MCF 10A (cell line): ENCODE measurements at regions of chr9 and their contacts with region 1.

Region 1: GRCh38 chr9:105064315-105065097 is 136.6 kb upstream of the ABCA1 start:
- DNase-seq: peak; percentile 97
- H3K4me3 Mint-ChIP-seq: peak overlapping the region; percentile 47
- H3K27ac Mint-ChIP-seq: peak overlapping the region; percentile 92
- H3K4me1 Mint-ChIP-seq: peaks cover 16% of the 10 kb centered on the region
- H3K27me3 Mint-ChIP-seq: no peaks in the 10 kb centered on the region
- CTCF ChIP-seq: no peak

Region 2: DNA sequence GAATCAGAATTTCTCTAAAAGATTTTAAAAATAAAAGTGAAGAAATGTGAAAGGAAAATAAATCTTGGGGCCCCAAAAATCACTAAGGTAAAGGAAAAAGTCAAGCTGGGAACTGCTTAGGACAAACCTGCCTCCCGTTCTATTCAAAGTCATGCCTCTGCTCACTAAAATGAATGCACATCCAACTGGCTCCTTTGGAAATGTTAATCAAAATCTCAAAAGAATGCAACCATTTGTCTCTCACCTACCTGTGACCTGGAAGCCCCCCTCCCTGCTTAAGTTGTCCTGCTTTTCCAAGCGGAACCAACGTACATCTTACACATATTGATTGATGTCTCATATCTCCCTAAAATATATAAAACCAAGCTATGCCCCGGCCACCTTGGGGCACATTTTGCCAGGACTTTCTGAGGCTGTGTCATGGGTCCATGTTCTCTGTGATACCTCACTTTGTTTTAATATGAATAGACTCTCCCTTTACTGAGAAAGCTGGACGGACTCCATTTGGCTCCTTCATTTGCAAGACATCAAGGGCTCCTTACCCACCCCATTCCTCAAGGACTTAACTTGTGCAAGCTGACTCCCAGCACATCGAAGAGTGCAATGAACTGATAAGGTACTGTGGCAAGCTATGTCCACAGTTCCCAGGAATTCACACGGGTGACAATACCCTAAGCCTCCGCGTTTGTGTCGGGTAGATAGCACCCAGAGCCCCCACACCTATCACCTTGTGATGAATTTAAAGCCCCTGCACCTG is 806.0 kb before region 1 on chr9:
- CTCF ChIA-PET with region 1: no interaction called
- POLR2A ChIA-PET with region 1: no interaction called
- intact Hi-C with region 1: no loop called
- DNase-seq: no peak
- H3K4me3 Mint-ChIP-seq: no peak overlapping the region
- H3K27ac Mint-ChIP-seq: no peak overlapping the region
- H3K4me1 Mint-ChIP-seq: peaks cover 10% of the 10 kb centered on the region
- H3K27me3 Mint-ChIP-seq: no peaks in the 10 kb centered on the region
- CTCF ChIP-seq: no peak

Region 3: GRCh38 chr9:104339692-104340091 is 724.8 kb before region 1 on chr9:
- CTCF ChIA-PET with region 1: no interaction called
- POLR2A ChIA-PET with region 1: no interaction called
- intact Hi-C with region 1: no loop called
- DNase-seq: no peak
- H3K4me3 Mint-ChIP-seq: no peak overlapping the region
- H3K27ac Mint-ChIP-seq: no peak overlapping the region
- H3K4me1 Mint-ChIP-seq: no peaks in the 10 kb centered on the region
- H3K27me3 Mint-ChIP-seq: no peaks in the 10 kb centered on the region
- CTCF ChIP-seq: no peak

Region 4: DNA sequence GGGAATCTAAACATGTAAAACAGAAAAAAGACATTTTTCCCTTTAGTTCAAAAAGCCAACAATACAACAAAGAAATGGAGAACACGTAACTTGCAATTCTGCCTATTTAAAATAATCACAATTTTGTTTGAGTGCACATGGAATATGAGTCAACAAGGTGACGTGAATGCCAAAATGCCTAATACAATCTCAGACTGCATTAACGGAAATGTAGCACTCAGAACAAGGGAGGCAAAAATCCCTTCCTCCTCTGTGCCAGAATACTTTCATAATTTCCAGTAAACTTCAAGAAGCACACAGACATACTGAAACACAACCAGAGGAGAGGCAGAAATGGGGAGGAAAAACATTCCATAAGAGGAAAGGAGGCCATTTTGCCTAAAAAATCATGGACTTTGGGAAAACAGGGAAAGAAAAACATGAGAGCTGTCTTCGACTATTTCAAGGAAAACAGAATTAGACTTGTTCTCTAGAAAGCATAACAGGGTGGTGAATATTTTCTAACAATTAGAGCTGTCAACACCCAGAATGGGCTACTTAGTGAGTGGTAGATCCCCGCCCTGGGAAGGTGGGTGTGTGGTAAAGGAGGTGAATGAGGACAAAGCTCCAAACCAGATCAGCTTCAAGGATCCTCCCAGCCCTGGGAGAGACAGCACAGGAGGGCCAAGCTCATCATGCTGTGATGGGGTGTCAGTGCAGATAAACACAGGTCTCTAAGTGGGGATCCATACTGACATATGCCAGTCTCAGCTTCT is 184.8 kb before region 1 on chr9:
- CTCF ChIA-PET with region 1: no interaction called
- POLR2A ChIA-PET with region 1: no interaction called
- intact Hi-C with region 1: no loop called
- DNase-seq: peak; percentile 58
- H3K4me3 Mint-ChIP-seq: no peak overlapping the region
- H3K27ac Mint-ChIP-seq: peak overlapping the region; percentile 11
- H3K4me1 Mint-ChIP-seq: peaks cover 14% of the 10 kb centered on the region
- H3K27me3 Mint-ChIP-seq: no peaks in the 10 kb centered on the region
- CTCF ChIP-seq: no peak

Region 5: GRCh38 chr9:104968025-104968982 is 96.2 kb before region 1 on chr9:
- CTCF ChIA-PET with region 1: interaction called, 3 read pairs
- POLR2A ChIA-PET with region 1: interaction called, 4 read pairs
- intact Hi-C with region 1: loop called (anchors 5 kb)
- DNase-seq: peak; percentile 93
- H3K4me3 Mint-ChIP-seq: peak overlapping the region; percentile 82
- H3K27ac Mint-ChIP-seq: peak overlapping the region; percentile 82
- H3K4me1 Mint-ChIP-seq: peaks cover 16% of the 10 kb centered on the region
- H3K27me3 Mint-ChIP-seq: no peaks in the 10 kb centered on the region
- CTCF ChIP-seq: no peak

Region 6: GRCh38 chr9:104991144-104991953 is 73.2 kb before region 1 on chr9:
- CTCF ChIA-PET with region 1: interaction called, 4 read pairs
- POLR2A ChIA-PET with region 1: interaction called, 38 read pairs
- intact Hi-C with region 1: loop called (anchors 10 kb)
- DNase-seq: peak; percentile 81
- H3K4me3 Mint-ChIP-seq: peak overlapping the region; percentile 89
- H3K27ac Mint-ChIP-seq: peak overlapping the region; percentile 91
- H3K4me1 Mint-ChIP-seq: peaks cover 24% of the 10 kb centered on the region
- H3K27me3 Mint-ChIP-seq: no peaks in the 10 kb centered on the region
- CTCF ChIP-seq: no peak

Region 7: DNA sequence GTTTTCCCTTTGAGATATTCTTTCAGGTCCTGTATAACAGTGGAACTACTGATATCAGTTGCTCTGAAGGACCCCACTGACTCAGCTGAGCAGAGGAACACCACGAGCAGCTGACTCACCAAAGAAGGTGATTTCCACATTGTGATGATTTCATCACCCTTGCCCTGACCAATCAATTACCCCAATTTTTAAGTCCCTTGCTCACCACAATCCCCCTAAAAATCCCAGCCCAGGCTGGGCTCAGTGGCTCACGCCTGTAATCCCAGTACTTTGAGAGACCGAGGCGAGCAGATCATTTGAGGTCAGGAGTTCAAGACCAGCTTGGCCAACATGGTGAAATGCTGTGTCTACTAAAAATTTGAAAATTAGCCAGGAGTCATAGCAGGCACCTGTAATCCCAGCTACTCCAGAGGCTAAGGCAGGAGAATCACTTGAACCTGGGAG is 11.3 kb before region 1 on chr9:
- CTCF ChIA-PET with region 1: interaction called, 5 read pairs
- POLR2A ChIA-PET with region 1: interaction called, 39 read pairs
- intact Hi-C with region 1: loop called (anchors 1 kb)
- DNase-seq: peak; percentile 88
- H3K4me3 Mint-ChIP-seq: no peak overlapping the region
- H3K27ac Mint-ChIP-seq: peak overlapping the region; percentile 80
- H3K4me1 Mint-ChIP-seq: peaks cover 29% of the 10 kb centered on the region
- H3K27me3 Mint-ChIP-seq: no peaks in the 10 kb centered on the region
- CTCF ChIP-seq: no peak

Region 8: DNA sequence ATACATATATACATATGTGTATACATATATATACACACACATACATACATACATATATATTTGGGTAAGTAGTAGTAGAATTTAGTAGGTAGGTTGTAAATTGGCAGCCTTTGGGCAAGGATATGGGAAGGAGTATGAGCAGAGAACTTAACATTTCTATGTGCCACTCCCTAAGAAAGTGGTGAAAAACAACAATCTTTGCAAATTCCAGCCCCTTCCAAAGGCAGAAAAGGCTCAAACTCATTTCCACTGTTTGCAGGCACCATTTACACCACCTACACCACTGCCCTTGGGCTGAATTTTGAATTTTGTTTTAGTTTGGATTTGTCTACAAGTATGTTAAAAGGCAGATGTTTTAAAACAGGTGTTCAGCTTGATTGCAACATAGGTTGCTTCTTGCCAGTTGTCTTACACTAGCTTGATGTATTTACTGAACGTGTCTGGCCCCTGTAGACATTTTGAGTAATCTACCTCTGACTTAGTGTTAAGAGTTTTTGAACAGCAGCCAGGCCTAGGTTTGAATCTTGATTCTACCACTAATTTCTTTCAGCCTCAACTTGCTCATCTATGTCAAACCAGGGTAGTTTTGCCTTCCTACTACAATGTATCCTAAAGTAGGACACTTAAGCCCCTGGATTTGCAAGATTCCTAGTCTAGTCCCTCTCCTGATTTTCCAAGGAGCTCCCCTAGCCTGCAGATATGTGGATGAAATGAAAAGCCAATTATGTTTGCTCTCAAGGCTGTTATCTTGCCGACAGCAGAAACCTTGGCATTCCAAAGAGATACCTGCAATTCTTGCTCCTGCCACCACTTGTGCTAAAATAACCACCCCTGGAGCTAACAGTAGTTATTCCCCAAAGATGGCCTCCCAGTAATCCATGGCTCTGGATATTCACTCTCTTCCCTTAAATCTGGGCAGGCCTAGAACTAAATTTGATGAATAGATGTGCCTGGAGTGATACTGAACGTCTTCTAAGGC is 23.7 kb after region 1 on chr9:
- CTCF ChIA-PET with region 1: interaction called, 10 read pairs
- POLR2A ChIA-PET with region 1: interaction called, 17 read pairs
- intact Hi-C with region 1: no loop called
- DNase-seq: peak; percentile 55
- H3K4me3 Mint-ChIP-seq: no peak overlapping the region
- H3K27ac Mint-ChIP-seq: no peak overlapping the region
- H3K4me1 Mint-ChIP-seq: peaks cover 10% of the 10 kb centered on the region
- H3K27me3 Mint-ChIP-seq: no peaks in the 10 kb centered on the region
- CTCF ChIP-seq: no peak